ENCODE measurements at regions of chr2 and their contacts with region 1.

Region 1: GRCh38 chr2:203730076-203730729 is 23.8 kb downstream of the CD28 start:
- DNase-seq: no peak
- ATAC-seq: peak in 1 of 2 donors; percentile 33
- H3K4me3 Mint-ChIP-seq: peak overlapping the region in 6 of 10 donors; percentile 4 to 42 (median 28)
- H3K27ac Mint-ChIP-seq: peak overlapping the region; percentile 2 to 98 (median 43)
- H3K4me1 Mint-ChIP-seq: peaks cover 40 to 86% (median 71%) of the 10 kb centered on the region in 4 donors
- H3K27me3 Mint-ChIP-seq: no peaks in the 10 kb centered on the region

Region 2: DNA sequence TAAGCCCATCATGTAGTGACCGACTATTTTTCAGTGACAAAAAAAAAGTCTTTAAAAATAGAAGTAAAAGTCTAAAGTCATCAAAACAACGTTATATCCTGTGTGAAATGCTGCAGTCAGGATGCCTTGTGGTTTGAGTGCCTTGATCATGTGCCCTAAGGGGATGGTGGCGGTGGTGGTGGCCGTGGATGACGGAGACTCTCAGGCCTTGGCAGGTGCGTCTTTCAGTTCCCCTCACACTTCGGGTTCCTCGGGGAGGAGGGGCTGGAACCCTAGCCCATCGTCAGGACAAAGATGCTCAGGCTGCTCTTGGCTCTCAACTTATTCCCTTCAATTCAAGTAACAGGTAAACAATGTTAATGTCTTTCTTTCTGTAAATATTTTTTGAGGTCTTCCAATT is 23.8 kb before region 1 on chr2 and contains the start of gene CD28:
- POLR2A ChIA-PET with region 1: interaction called, 15 read pairs
- DNase-seq: peak; percentile 64 to 96 (median 90)
- ATAC-seq: peak; percentile 86 to 90
- H3K4me3 Mint-ChIP-seq: peak within 1 kb of the TSS; percentile 82 to 97 (median 92)
- H3K27ac Mint-ChIP-seq: peak within 1 kb of the TSS; percentile 93 to 99 (median 96)
- H3K4me1 Mint-ChIP-seq: peaks cover 30 to 56% (median 50%) of the 10 kb centered on the region in 4 donors
- H3K27me3 Mint-ChIP-seq: no peaks in the 10 kb centered on the region
- polyA plus RNA-seq, gene CD28: 15.8 to 32.0 (median 29.3) TPM

Region 3: DNA sequence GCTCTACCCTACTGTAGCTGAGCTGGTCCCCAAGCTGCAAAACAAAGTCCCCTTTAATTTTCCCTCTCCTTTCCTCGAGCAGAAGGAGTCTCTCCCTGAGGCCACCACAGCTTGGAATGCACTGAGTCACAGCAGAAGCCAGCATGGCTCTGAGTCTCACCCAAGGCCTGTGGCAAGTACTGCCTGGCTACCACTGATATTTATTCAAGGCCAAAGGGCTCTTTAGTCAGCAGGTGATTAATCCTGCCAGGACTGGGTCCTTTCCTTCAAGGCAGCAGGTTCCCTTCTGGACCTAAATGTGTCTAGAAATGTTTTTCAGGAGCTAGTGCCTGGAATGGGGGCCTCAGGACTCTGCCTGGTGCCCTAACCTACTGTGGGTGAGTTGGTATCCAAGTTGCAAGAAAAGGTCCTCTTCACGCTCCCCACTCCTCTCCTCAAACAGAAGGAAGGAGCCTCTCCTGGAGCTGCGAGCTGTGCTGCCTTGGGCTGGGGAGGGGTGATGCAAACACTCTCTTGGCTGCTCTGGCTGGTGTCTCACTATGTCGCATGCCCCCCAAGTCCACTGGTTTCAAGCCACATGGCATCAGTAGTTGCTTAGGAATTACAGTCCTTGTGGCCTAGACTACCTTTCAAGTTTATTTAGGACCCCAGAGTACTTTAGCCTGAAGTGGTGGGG is 29.6 kb after region 1 on chr2:
- POLR2A ChIA-PET with region 1: no interaction called
- DNase-seq: no peak
- ATAC-seq: no peak
- H3K4me3 Mint-ChIP-seq: no peak overlapping the region
- H3K27ac Mint-ChIP-seq: peak overlapping the region in 4 of 10 donors; percentile 28 to 72 (median 38)
- H3K4me1 Mint-ChIP-seq: peaks cover 20 to 68% (median 44%) of the 10 kb centered on the region in 4 donors
- H3K27me3 Mint-ChIP-seq: no peaks in the 10 kb centered on the region

Region 4: DNA sequence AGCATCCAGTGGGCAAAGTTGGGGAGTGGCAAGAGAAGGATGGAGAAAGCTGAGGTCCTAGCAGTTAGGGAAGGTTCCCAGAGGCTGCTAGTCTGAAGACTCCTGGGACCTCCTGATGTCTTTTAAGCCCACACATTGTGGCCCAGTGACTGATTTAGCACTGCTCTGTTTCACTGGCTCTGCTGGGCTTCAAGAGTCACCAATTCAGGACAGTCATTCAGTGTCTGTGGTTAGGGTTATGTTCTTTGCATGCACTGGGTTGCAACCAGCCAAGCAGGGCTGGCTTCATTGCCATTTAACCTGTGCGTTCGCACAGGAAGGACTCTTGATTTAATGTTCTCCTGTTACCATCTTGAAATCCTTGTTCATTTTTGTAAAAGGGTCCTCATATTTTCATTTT is 405.5 kb after region 1 on chr2:
- POLR2A ChIA-PET with region 1: no interaction called
- DNase-seq: no peak
- ATAC-seq: no peak
- H3K4me3 Mint-ChIP-seq: no peak overlapping the region
- H3K27ac Mint-ChIP-seq: no peak overlapping the region
- H3K4me1 Mint-ChIP-seq: peaks cover 0 to 2% (median 0%) of the 10 kb centered on the region in 4 donors
- H3K27me3 Mint-ChIP-seq: peaks cover 0 to 6% (median 3%) of the 10 kb centered on the region in 5 donors

Measured in naive thymus-derived CD8-positive, alpha-beta T cell (primary cell).